ENCODE measurements at regions of chr19 and their contacts with region 1.

Region 1: GRCh38 chr19:39532233-39533002 is at the start of gene EID2B:
- DNase-seq: peak; percentile 95 to 98 (median 97)
- ATAC-seq: peak; percentile 93 to 99 (median 98)
- H3K4me3 ChIP-seq: peak within 1 kb of the TSS; percentile 58 to 98 (median 80)
- H3K27ac ChIP-seq: peak within 1 kb of the TSS; percentile 45 to 92 (median 82)
- H3K4me1 ChIP-seq: peaks cover 0 to 22% (median 13%) of the 10 kb centered on the region in 12 donors
- H3K27me3 ChIP-seq: no peaks in the 10 kb centered on the region
- CTCF ChIP-seq: peak; percentile 96 to 99 (median 98)
- POLR2A ChIP-seq: peak in 1 of 2 donors; percentile 78
- total RNA-seq, gene EID2B: 1.1 to 5.1 (median 2.9) TPM

Region 2: GRCh38 chr19:39341719-39342604 is 190.5 kb before region 1 on chr19 and contains the start of gene SAMD4B:
- intact Hi-C with region 1: loop called in 2 of 10 experiments (anchors 5 to 10 kb)
- DNase-seq: peak; percentile 99 to 100 (median 99)
- ATAC-seq: peak; percentile 96 to 97 (median 97)
- H3K4me3 ChIP-seq: peak within 1 kb of the TSS; percentile 71 to 96 (median 86)
- H3K27ac ChIP-seq: peak within 1 kb of the TSS in 11 of 12 donors; percentile 80 to 93 (median 90)
- H3K4me1 ChIP-seq: peaks cover 0 to 58% (median 31%) of the 10 kb centered on the region in 12 donors
- H3K27me3 ChIP-seq: no peaks in the 10 kb centered on the region
- CTCF ChIP-seq: peak; percentile 75 to 97 (median 88)
- POLR2A ChIP-seq: peak; percentile 25 to 90
- total RNA-seq, gene SAMD4B: 34.9 to 101 (median 52.3) TPM

Region 3: DNA sequence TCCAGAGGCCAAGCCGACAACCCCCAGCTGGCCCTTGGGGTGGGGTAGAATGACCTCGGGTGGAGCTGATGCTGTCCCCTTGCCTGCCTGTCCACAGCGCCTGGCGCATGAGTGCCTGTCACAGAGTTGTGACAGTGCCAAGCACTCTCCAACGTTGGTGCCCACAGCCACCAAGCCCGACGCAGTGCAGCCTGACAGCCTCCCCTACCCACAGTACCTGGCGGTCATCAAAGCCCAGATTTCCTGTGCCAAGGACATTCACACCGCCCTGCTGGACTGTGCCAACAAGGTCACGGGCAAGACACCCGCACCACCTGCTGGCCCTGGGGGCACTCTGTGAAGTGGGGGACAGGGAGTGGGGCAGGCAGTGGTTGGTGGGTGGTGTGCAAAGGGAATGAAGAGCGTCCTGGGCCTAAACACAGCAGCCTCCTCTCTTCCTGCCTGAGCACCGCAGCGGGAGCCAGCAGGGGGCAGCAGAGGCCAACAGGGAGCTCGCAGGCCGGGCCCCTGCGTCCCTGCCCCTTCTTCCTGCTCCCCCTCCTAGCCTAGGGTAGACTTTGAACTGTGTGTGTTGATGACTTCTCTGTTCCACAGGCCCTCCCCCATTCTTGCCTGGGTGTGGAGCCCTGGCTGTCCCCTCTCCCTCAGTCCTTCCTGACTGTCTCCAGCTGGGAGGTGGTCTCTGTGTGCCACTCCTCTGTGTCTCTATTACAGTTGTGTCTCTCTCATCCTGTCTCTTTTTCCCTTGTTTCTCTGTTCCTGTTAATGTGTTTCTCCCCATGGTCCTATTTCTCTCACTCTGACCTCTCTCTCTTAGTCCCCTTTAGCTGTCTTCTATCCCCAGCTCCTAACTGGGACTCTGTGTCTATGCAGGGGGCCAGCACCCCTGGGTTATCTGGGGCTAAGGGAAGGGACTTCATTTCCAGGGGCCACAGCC is 134.8 kb before region 1 on chr19:
- intact Hi-C with region 1: loop called in 5 of 10 experiments (anchors 2 to 10 kb)
- DNase-seq: peak; percentile 89 to 96 (median 90)
- ATAC-seq: peak; percentile 70 to 85 (median 80)
- H3K4me3 ChIP-seq: peak overlapping the region in 3 of 12 donors; percentile 2 to 44 (median 20)
- H3K27ac ChIP-seq: peak overlapping the region; percentile 11 to 100 (median 79)
- H3K4me1 ChIP-seq: peaks cover 6 to 56% (median 25%) of the 10 kb centered on the region in 12 donors
- H3K27me3 ChIP-seq: no peaks in the 10 kb centered on the region
- CTCF ChIP-seq: peak; percentile 95 to 100 (median 98)
- POLR2A ChIP-seq: peak in 1 of 2 donors; percentile 17

Region 4: DNA sequence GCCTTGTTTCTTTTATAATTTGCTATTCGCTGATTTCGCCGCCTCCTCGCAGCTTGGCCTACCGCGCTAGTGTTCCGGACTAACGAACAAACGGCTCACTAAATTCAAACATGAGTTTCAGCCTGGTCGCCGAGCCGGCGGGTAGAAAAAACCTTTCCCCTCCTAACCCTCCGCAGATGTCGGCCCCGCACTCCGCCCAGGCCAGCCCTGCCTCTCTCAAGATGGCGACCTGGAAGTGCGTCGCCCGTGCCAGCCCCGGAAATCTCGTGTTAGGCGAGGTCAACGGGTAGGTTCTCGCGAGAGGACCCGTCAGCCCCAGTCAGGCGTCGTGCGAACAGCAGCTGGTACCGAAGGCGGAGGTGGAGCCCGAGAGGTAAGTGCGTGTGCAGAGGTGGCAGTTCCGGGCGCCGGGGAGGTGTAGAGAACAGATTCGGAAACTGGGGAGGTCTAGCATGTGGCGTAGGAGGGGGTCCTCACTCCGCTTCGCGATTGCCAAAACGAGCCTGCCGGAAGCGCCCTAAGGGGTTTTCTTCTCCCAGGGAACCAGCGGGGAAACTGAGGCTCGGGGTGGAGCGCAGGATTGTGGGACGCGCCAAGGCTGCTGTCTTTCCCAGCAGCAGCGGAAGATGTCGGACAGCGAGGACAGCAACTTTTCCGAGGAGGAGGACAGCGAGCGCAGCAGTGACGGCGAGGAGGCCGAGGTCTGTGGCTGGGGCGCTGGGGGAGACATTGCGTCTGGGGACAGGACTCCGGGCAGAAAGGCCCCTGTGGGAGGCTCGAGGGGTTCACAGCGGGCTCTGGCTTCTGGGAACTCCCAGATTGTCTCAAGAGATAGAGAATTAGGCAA is 86.9 kb before region 1 on chr19 and contains the start of gene SUPT5H:
- intact Hi-C with region 1: loop called in 5 of 10 experiments (anchors 1 to 10 kb)
- DNase-seq: peak; percentile 97 to 98 (median 97)
- ATAC-seq: peak; percentile 98 to 99 (median 98)
- H3K4me3 ChIP-seq: peak within 1 kb of the TSS; percentile 65 to 98 (median 86)
- H3K27ac ChIP-seq: peak within 1 kb of the TSS; percentile 86 to 96 (median 92)
- H3K4me1 ChIP-seq: peaks cover 8 to 51% (median 36%) of the 10 kb centered on the region in 12 donors
- H3K27me3 ChIP-seq: no peaks in the 10 kb centered on the region
- CTCF ChIP-seq: peak in 1 of 12 donors; percentile 12
- POLR2A ChIP-seq: peak; percentile 34 to 91
- total RNA-seq, gene SUPT5H: 64.2 to 113 (median 81.7) TPM

Region 5: GRCh38 chr19:39497996-39498797 is 34.2 kb before region 1 on chr19:
- intact Hi-C with region 1: loop called in 1 of 10 experiments (anchors 5 kb)
- DNase-seq: no peak
- ATAC-seq: peak in 3 of 4 donors; percentile 29 to 69 (median 41)
- H3K4me3 ChIP-seq: peak overlapping the region in 4 of 12 donors; percentile 8 to 16 (median 12)
- H3K27ac ChIP-seq: no peak overlapping the region
- H3K4me1 ChIP-seq: peaks cover 3 to 27% (median 15%) of the 10 kb centered on the region in 12 donors
- H3K27me3 ChIP-seq: peaks cover 30 to 68% (median 52%) of the 10 kb centered on the region in 9 donors
- CTCF ChIP-seq: peak in 9 of 12 donors; percentile 17 to 49 (median 35)
- POLR2A ChIP-seq: no peak

Measured in heart left ventricle (tissue), 16 donors.